Activated B cell treated with CpG ODN at 0.5 μM for 24 hours (primary cell): ENCODE measurements at regions of chr2 and their contacts with region 1.

Region 1: DNA sequence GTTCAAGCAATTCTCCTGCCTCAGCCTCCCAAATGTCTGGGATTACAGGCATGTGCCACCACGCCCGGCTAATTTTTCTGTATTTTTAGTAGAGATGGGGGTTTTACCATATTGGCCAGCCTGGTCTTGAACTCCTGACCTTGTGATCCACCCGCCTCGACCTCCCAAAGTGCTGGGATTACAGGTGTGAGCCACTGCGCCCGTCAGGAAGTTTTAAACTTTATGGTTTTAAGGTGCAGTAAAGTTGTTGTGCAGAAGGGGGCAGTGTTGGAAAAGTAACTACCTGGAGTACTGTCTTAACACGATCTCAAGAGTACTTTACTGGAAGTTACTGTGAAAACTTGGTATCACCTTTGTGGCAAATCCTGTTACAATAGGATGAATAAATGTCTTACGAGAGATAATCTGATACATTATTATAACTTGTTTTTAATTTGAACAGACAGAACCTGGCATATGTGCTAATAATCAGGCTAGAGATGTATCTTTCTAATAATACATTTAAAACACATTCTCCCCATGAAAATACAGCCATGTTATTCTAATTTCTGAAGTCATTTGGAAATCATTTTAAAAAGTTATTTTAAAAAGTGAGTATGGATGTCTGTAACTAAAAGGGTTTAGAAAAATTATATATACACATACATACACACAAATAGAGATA is 10.8 kb downstream of the SPDYA start:
- DNase-seq: peak; percentile 17
- ATAC-seq: peak; percentile 72
- H3K4me3 Mint-ChIP-seq: no peak overlapping the region
- H3K27ac Mint-ChIP-seq: no peak overlapping the region
- H3K4me1 Mint-ChIP-seq: peaks cover 4% of the 10 kb centered on the region
- H3K27me3 Mint-ChIP-seq: no peaks in the 10 kb centered on the region
- CTCF ChIP-seq: no peak

Region 2: DNA sequence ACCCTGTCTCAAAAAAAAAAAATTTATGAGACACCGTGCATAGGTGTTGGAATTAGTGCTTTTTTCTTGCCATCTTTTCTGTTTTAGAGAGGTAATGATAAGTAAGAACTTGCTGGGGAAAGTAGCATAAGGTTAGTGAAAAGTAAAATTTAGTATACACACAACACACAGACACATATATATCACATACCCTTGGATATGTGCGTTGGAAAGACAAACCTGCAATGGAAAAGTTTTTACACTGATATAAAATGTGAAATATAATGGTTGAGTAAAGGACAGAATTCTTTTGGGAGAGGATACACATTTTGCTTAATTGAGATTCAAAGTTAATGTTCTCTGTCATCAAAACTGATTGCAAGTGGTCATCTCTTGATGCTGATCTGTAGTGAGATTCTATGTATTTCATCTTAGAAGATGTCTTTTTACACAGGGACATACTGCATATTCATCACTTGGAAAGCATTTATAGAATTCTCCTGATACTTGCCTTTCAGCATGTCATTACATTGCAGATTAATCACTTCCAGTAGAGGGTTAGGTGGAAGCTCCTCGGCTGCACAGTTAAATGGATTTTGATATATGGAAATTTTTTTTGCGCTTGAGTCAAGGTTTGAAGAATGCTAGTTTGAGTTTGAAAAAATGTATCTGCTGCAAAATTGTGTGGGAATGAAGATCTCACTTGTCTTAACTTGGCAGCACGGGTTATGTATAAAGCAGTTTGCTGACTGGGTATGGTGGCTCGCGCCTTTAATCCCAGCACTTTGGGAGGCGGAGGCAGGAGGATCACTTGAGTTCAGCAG is 56.3 kb before region 1 on chr2:
- CTCF ChIA-PET with region 1: no interaction called
- POLR2A ChIA-PET with region 1: no interaction called
- intact Hi-C with region 1: no loop called
- DNase-seq: no peak
- ATAC-seq: no peak
- H3K4me3 Mint-ChIP-seq: no peak overlapping the region
- H3K27ac Mint-ChIP-seq: no peak overlapping the region
- H3K4me1 Mint-ChIP-seq: peaks cover 69% of the 10 kb centered on the region
- H3K27me3 Mint-ChIP-seq: no peaks in the 10 kb centered on the region
- CTCF ChIP-seq: no peak

Region 3: GRCh38 chr2:28952816-28953211 is 131.4 kb after region 1 on chr2:
- CTCF ChIA-PET with region 1: no interaction called
- POLR2A ChIA-PET with region 1: no interaction called
- intact Hi-C with region 1: loop called (anchors 2 kb)
- DNase-seq: no peak
- ATAC-seq: no peak
- H3K4me3 Mint-ChIP-seq: no peak overlapping the region
- H3K27ac Mint-ChIP-seq: no peak overlapping the region
- H3K4me1 Mint-ChIP-seq: no peaks in the 10 kb centered on the region
- H3K27me3 Mint-ChIP-seq: no peaks in the 10 kb centered on the region
- CTCF ChIP-seq: no peak